CD8-positive, alpha-beta T cell (primary cell): ENCODE measurements at regions of chr9 and their contacts with region 1.

Region 1: GRCh38 chr9:129610473-129611301 is 10.2 kb downstream of the C9orf50 start:
- DNase-seq: peak; percentile 50 to 85 (median 75)
- ATAC-seq: peak; percentile 57
- H3K4me3 ChIP-seq: peak overlapping the region; percentile 36 to 77
- H3K4me3 Mint-ChIP-seq: peak overlapping the region; percentile 76
- H3K27ac ChIP-seq: no peak overlapping the region
- H3K27ac Mint-ChIP-seq: peak overlapping the region; percentile 69
- H3K4me1 ChIP-seq: peaks cover 25% of the 10 kb centered on the region
- H3K4me1 Mint-ChIP-seq: peaks cover 29% of the 10 kb centered on the region
- H3K27me3 ChIP-seq: no peaks in the 10 kb centered on the region
- H3K27me3 Mint-ChIP-seq: no peaks in the 10 kb centered on the region
- CTCF ChIP-seq: peak; percentile 93

Region 2: GRCh38 chr9:129131300-129132145 is 479.2 kb before region 1 on chr9:
- CTCF ChIA-PET with region 1: interaction called, 53 read pairs
- POLR2A ChIA-PET with region 1: no interaction called
- intact Hi-C with region 1: loop called (anchors 1 kb)
- DNase-seq: peak; percentile 77 to 92 (median 85)
- ATAC-seq: peak; percentile 100
- H3K4me3 ChIP-seq: no peak overlapping the region
- H3K4me3 Mint-ChIP-seq: no peak overlapping the region
- H3K27ac ChIP-seq: peak overlapping the region in 1 of 2 experiments; percentile 1
- H3K27ac Mint-ChIP-seq: peak overlapping the region; percentile 41
- H3K4me1 ChIP-seq: peaks cover 3% of the 10 kb centered on the region
- H3K4me1 Mint-ChIP-seq: peaks cover 5% of the 10 kb centered on the region
- H3K27me3 ChIP-seq: no peaks in the 10 kb centered on the region
- H3K27me3 Mint-ChIP-seq: no peaks in the 10 kb centered on the region
- CTCF ChIP-seq: peak; percentile 96

Region 3: GRCh38 chr9:129383561-129384416 is 226.9 kb before region 1 on chr9:
- CTCF ChIA-PET with region 1: interaction called, 3 read pairs
- POLR2A ChIA-PET with region 1: no interaction called
- intact Hi-C with region 1: loop called (anchors 1 to 10 kb)
- DNase-seq: peak; percentile 46 to 90 (median 77)
- ATAC-seq: peak; percentile 90
- H3K4me3 ChIP-seq: peak overlapping the region; percentile 46 to 64
- H3K4me3 Mint-ChIP-seq: peak overlapping the region; percentile 84
- H3K27ac ChIP-seq: peak overlapping the region; percentile 77 to 90
- H3K27ac Mint-ChIP-seq: peak overlapping the region; percentile 94
- H3K4me1 ChIP-seq: peaks cover 18% of the 10 kb centered on the region
- H3K4me1 Mint-ChIP-seq: peaks cover 15% of the 10 kb centered on the region
- H3K27me3 ChIP-seq: no peaks in the 10 kb centered on the region
- H3K27me3 Mint-ChIP-seq: no peaks in the 10 kb centered on the region
- CTCF ChIP-seq: peak; percentile 27

Region 4: DNA sequence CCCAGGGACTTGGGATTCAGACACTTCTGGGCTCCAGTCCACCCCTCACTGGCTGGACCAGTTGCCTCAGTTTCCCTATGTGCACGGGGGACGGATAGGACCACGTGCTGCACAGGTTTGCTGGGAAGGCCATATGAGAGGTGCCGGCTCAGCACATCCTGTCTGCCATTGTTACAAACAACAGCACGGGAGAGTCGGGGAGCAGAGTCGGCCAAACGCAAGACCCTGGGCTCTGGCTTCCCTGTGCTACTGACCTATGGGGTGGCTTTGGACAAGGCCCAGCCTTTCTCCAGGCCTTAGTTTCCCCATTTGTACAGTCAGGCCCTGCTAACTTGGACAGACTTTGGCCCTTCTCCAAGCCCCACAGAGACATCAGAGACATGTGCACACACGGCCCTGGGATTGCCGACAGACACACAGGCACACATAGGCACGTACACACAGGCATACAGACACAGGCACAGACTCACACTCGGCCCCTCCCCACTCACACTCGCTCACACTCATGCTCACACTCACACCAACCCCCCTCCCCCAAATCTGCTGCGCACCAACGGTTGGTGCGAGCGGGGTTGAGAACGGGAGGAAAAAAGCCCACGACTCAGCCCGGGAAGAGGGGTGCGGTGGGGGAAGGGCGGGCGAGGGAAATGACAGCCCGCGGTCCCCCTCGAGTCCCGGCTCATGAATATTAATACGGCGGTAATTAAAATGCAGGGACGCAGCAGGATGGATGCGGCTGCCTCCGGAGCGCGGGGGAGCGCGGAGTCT is 122.9 kb before region 1 on chr9:
- CTCF ChIA-PET with region 1: no interaction called
- POLR2A ChIA-PET with region 1: no interaction called
- intact Hi-C with region 1: loop called (anchors 5 to 10 kb)
- DNase-seq: peak in 3 of 9 experiments; percentile 64 to 80 (median 64)
- ATAC-seq: peak; percentile 14
- H3K4me3 ChIP-seq: peak overlapping the region; percentile 55 to 58
- H3K4me3 Mint-ChIP-seq: peak overlapping the region; percentile 80
- H3K27ac ChIP-seq: peak overlapping the region; percentile 72 to 83
- H3K27ac Mint-ChIP-seq: peak overlapping the region; percentile 92
- H3K4me1 ChIP-seq: peaks cover 56% of the 10 kb centered on the region
- H3K4me1 Mint-ChIP-seq: peaks cover 42% of the 10 kb centered on the region
- H3K27me3 ChIP-seq: no peaks in the 10 kb centered on the region
- H3K27me3 Mint-ChIP-seq: no peaks in the 10 kb centered on the region
- CTCF ChIP-seq: no peak

Region 5: DNA sequence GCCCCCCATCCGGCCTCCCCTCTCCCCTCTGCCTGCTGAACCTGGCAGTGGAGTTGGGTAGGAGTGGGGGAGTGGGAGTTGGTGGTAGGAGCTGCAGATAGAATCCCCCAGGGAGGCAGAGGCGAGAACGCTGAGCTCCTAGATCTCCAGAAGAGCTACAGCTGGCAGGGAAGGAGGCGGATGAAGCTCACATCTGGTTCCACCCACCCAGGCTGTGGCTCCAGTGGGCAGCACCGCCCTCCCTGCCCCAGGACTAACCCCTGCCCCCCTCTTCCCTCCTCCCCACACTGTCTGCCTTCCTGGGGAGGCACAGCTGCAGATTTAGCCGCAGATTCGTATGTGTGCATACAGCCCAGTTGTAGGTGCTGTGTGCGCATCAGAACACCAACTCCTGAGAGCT is 24.0 kb before region 1 on chr9:
- CTCF ChIA-PET with region 1: interaction called, 3 read pairs
- POLR2A ChIA-PET with region 1: no interaction called
- intact Hi-C with region 1: loop called in 1 of 2 experiments (anchors 2 kb)
- DNase-seq: peak in 5 of 9 experiments; percentile 42 to 68 (median 61)
- ATAC-seq: peak; percentile 64
- H3K4me3 ChIP-seq: no peak overlapping the region
- H3K4me3 Mint-ChIP-seq: peak overlapping the region; percentile 29
- H3K27ac ChIP-seq: peak overlapping the region in 1 of 2 experiments; percentile 43
- H3K27ac Mint-ChIP-seq: peak overlapping the region; percentile 86
- H3K4me1 ChIP-seq: peaks cover 22% of the 10 kb centered on the region
- H3K4me1 Mint-ChIP-seq: peaks cover 31% of the 10 kb centered on the region
- H3K27me3 ChIP-seq: no peaks in the 10 kb centered on the region
- H3K27me3 Mint-ChIP-seq: no peaks in the 10 kb centered on the region
- CTCF ChIP-seq: no peak